IMR-90 (cell line): ENCODE measurements at regions of chr1 and their contacts with region 1.

Region 1: DNA sequence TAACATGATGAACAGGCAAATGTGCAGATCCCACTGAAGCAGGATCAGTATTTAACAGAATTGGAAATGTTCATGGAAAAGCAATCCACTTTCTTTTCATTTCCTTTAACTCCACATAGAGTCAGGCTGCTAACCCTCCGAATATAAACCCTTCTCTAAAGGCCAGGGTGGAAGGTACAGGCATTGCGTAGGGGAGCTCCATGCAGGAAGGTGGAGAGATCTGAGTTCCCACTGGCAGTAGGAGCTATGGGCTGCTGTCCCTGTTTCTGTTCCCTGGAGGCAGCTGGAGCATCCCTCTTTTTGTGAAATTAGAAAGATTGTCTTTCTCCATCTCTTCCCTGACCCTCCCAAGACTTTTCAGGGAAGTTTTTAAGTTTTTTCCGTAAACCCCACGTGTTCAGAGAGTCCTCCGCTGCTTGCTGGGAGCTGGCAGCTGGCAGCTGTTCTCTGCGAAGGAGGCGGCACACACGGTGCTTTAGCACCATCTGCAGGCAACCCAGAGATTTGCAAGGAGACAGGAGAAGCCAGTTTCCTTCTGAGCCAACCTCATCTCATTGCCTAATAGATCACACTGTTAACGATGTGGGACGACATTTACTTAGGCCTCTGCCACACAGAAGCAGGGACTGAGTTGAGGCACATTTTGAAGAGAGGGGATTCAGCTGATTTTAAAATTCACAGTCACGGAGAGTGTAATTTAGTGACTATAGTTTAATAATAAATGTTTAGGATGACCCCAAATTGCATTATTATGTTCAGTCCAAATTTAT is 55.4 kb upstream of the HOOK1 start:
- DNase-seq: peak; percentile 83
- ATAC-seq: peak; percentile 97
- H3K4me3 ChIP-seq: no peak overlapping the region
- H3K27ac ChIP-seq: peak overlapping the region; percentile 60
- H3K4me1 ChIP-seq: peaks cover 2% of the 10 kb centered on the region; the same call in 1 of the 2 replicates
- H3K27me3 ChIP-seq: no peaks in the 10 kb centered on the region; the same call in 1 of the 2 replicates
- CTCF ChIP-seq: peak; percentile 98
- POLR2A ChIP-seq: peak; percentile 79
- RAD21 ChIP-seq: peak; percentile 100

Region 2: GRCh38 chr1:58546520-58547308 is 1212.6 kb before region 1 on chr1 and contains the start of gene OMA1:
- CTCF ChIA-PET with region 1: interaction called, 4 read pairs
- POLR2A ChIA-PET with region 1: no interaction called
- dilution Hi-C with region 1: no loop called
- in situ Hi-C with region 1: no loop called
- intact Hi-C with region 1: loop called (anchors 10 kb)
- DNase-seq: peak; percentile 98
- ATAC-seq: peak; percentile 97
- H3K4me3 ChIP-seq: peak within 1 kb of the TSS; percentile 73
- H3K27ac ChIP-seq: peak within 1 kb of the TSS; percentile 87
- H3K4me1 ChIP-seq: no peaks in the 10 kb centered on the region; the same call in 1 of the 2 replicates
- H3K27me3 ChIP-seq: peaks cover 9% of the 10 kb centered on the region
- CTCF ChIP-seq: peak; percentile 98
- POLR2A ChIP-seq: peak; percentile 88
- RAD21 ChIP-seq: peak; percentile 89
- total RNA-seq, gene OMA1: 5.9 and 11.9 TPM in 2 replicates

Region 3: GRCh38 chr1:58903514-58904298 is 855.6 kb before region 1 on chr1:
- CTCF ChIA-PET with region 1: interaction called, 3 read pairs
- POLR2A ChIA-PET with region 1: no interaction called
- dilution Hi-C with region 1: no loop called
- in situ Hi-C with region 1: no loop called
- intact Hi-C with region 1: loop called (anchors 5 kb)
- DNase-seq: peak; percentile 89
- ATAC-seq: peak; percentile 89
- H3K4me3 ChIP-seq: peak overlapping the region; percentile 55
- H3K27ac ChIP-seq: peak overlapping the region; percentile 93
- H3K4me1 ChIP-seq: peaks cover 11% of the 10 kb centered on the region
- H3K27me3 ChIP-seq: no peaks in the 10 kb centered on the region
- CTCF ChIP-seq: no peak
- POLR2A ChIP-seq: peak; percentile 92
- RAD21 ChIP-seq: 0 out of 2 replicates have a peak, but pooled peaks have one; percentile 1

Region 4: GRCh38 chr1:59150577-59151391 is 608.6 kb before region 1 on chr1:
- CTCF ChIA-PET with region 1: no interaction called
- POLR2A ChIA-PET with region 1: no interaction called
- dilution Hi-C with region 1: no loop called
- in situ Hi-C with region 1: no loop called
- intact Hi-C with region 1: loop called (anchors 2 kb)
- DNase-seq: peak; percentile 100
- ATAC-seq: peak; percentile 94
- H3K4me3 ChIP-seq: peak overlapping the region; percentile 23; the same call in 1 of the 2 replicates
- H3K27ac ChIP-seq: peak overlapping the region; percentile 94
- H3K4me1 ChIP-seq: peaks cover 24% of the 10 kb centered on the region
- H3K27me3 ChIP-seq: no peaks in the 10 kb centered on the region
- CTCF ChIP-seq: 0 out of 2 replicates have a peak, but pooled peaks have one; percentile 5
- POLR2A ChIP-seq: no peak
- RAD21 ChIP-seq: no peak; the same call in 1 of the 2 replicates

Region 5: DNA sequence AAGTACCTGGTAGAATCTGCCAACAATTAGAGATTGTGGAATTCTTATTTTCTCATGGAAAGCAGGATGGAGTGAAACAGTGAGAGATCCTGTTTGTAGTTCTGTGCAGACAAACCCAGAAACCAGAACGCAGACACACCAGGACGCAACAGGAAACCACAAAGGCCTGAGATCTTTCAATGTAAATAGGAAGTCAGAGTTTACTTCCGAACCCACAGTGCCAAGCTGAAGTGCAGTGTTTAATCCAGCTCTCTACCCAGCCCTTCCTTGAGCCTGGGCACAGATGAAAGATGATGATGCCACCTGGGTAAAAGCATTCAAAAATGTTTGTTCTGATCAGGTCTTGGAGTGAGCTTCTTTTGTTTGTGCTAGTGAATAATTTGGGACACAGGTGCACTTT is 188.8 kb before region 1 on chr1:
- CTCF ChIA-PET with region 1: no interaction called
- POLR2A ChIA-PET with region 1: no interaction called
- dilution Hi-C with region 1: no loop called
- in situ Hi-C with region 1: no loop called
- intact Hi-C with region 1: loop called (anchors 10 kb)
- DNase-seq: peak; percentile 43
- ATAC-seq: peak; percentile 31
- H3K4me3 ChIP-seq: no peak overlapping the region
- H3K27ac ChIP-seq: no peak overlapping the region
- H3K4me1 ChIP-seq: peaks cover 6% of the 10 kb centered on the region; the same call in 1 of the 2 replicates
- H3K27me3 ChIP-seq: no peaks in the 10 kb centered on the region
- CTCF ChIP-seq: no peak
- POLR2A ChIP-seq: no peak
- RAD21 ChIP-seq: no peak

Region 6: GRCh38 chr1:59738152-59738551 is 21.2 kb before region 1 on chr1:
- CTCF ChIA-PET with region 1: interaction called, 16 read pairs
- POLR2A ChIA-PET with region 1: no interaction called
- dilution Hi-C with region 1: no loop called
- in situ Hi-C with region 1: no loop called
- intact Hi-C with region 1: no loop called
- DNase-seq: peak; percentile 93
- ATAC-seq: peak; percentile 64
- H3K4me3 ChIP-seq: no peak overlapping the region
- H3K27ac ChIP-seq: peak overlapping the region; percentile 96; the same call in 1 of the 2 replicates
- H3K4me1 ChIP-seq: peaks cover 22% of the 10 kb centered on the region
- H3K27me3 ChIP-seq: no peaks in the 10 kb centered on the region
- CTCF ChIP-seq: no peak
- POLR2A ChIP-seq: no peak
- RAD21 ChIP-seq: no peak